A549 (cell line): ENCODE measurements at regions of chr2 and their contacts with region 1.

Region 1: GRCh38 chr2:231642631-231643494 is 50.2 kb downstream of the TEX44 start:
- DNase-seq: peak; percentile 95 to 97
- ATAC-seq: peak; percentile 93
- H3K4me3 ChIP-seq: peak overlapping the region; percentile 16; the same call in 2 of the 3 replicates
- H3K27ac ChIP-seq: peak overlapping the region; percentile 93 to 96
- H3K4me1 ChIP-seq: peaks cover 49% of the 10 kb centered on the region
- CTCF ChIP-seq: no peak
- EP300 ChIP-seq: no peak; a peak in 1 of 5 replicates
- POLR2A ChIP-seq: peak; percentile 29; the same call in 1 of the 2 replicates
- RAD21 ChIP-seq: no peak

Region 2: GRCh38 chr2:231632559-231633142 is 10.2 kb before region 1 on chr2:
- CTCF ChIA-PET with region 1: interaction called, 4,158 read pairs
- POLR2A ChIA-PET with region 1: interaction called, 11 read pairs
- DNase-seq: peak in 1 of 2 experiments; percentile 44
- ATAC-seq: peak; percentile 31 to 58; a peak in 3 of 6 replicates
- H3K4me3 ChIP-seq: no peak overlapping the region
- H3K27ac ChIP-seq: peak overlapping the region; percentile 66 to 72; a peak in 5 of 6 replicates
- H3K4me1 ChIP-seq: peaks cover 36% of the 10 kb centered on the region
- CTCF ChIP-seq: no peak
- EP300 ChIP-seq: no peak
- POLR2A ChIP-seq: no peak
- RAD21 ChIP-seq: no peak

Region 3: GRCh38 chr2:231662028-231662810 is 19.4 kb after region 1 on chr2:
- CTCF ChIA-PET with region 1: interaction called, 4,158 read pairs
- POLR2A ChIA-PET with region 1: interaction called, 25 read pairs
- DNase-seq: peak; percentile 69 to 99
- ATAC-seq: peak; percentile 48 to 72
- H3K4me3 ChIP-seq: peak overlapping the region; percentile 40
- H3K27ac ChIP-seq: peak overlapping the region; percentile 88 to 100
- H3K4me1 ChIP-seq: peaks cover 20% of the 10 kb centered on the region
- CTCF ChIP-seq: no peak; the same call in 2 of the 3 replicates
- EP300 ChIP-seq: no peak
- POLR2A ChIP-seq: peak; percentile 51
- RAD21 ChIP-seq: 0 out of 5 replicates have a peak, but pooled peaks of 1 of the 2 experiments have one; percentile 34